H1 (cell line): ENCODE measurements at regions of chr5 and their contacts with region 1.

Region 1: DNA sequence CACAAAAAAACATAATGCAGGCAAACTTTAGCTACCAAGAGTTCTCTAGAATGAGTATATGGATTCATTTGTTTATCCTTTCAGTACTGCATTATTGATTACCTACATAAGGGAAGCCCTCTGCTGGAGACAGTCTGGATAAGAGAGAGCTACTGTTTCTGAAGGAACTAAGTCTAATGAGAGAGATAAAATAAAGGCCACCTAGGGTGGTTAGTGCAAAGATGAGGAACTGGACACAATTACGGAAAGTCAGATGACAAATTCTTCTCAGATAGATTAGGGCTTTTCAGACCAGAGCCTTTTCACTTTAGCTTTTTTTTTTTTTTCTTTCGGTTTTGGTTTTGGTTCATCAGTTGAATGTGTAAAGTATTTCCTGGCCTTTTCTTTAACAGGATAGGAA is 31.3 kb downstream of the ISOC1 start:
- DNase-seq: no peak
- H3K4me3 ChIP-seq: no peak overlapping the region
- H3K27ac ChIP-seq: no peak overlapping the region
- H3K4me1 ChIP-seq: no peaks in the 10 kb centered on the region
- H3K27me3 ChIP-seq: no peaks in the 10 kb centered on the region
- CTCF ChIP-seq: no peak
- EP300 ChIP-seq: no peak
- POLR2A ChIP-seq: no peak
- RAD21 ChIP-seq: no peak

Region 2: GRCh38 chr5:129113871-129114270 is 11.9 kb before region 1 on chr5:
- CTCF ChIA-PET with region 1: interaction called, 30 read pairs
- POLR2A ChIA-PET with region 1: interaction called, 4 read pairs
- DNase-seq: no peak
- H3K4me3 ChIP-seq: no peak overlapping the region
- H3K27ac ChIP-seq: no peak overlapping the region
- H3K4me1 ChIP-seq: peaks cover 0 to 9% (median 5%) of the 10 kb centered on the region in 4 experiments; a peak in 4 of 7 replicates
- H3K27me3 ChIP-seq: no peaks in the 10 kb centered on the region
- CTCF ChIP-seq: no peak
- EP300 ChIP-seq: no peak
- POLR2A ChIP-seq: no peak
- RAD21 ChIP-seq: no peak

Region 3: GRCh38 chr5:129271303-129271702 is 145.5 kb after region 1 on chr5:
- CTCF ChIA-PET with region 1: interaction called, 10 read pairs
- POLR2A ChIA-PET with region 1: no interaction called
- DNase-seq: peak in 1 of 2 experiments; percentile 13
- H3K4me3 ChIP-seq: no peak overlapping the region
- H3K27ac ChIP-seq: no peak overlapping the region
- H3K4me1 ChIP-seq: no peaks in the 10 kb centered on the region
- H3K27me3 ChIP-seq: no peaks in the 10 kb centered on the region
- CTCF ChIP-seq: peak; percentile 17 to 73 (median 63)
- EP300 ChIP-seq: no peak
- POLR2A ChIP-seq: no peak
- RAD21 ChIP-seq: peak; percentile 72 to 74